ENCODE measurements at regions of chr1 and their contacts with region 1.

Region 1: DNA sequence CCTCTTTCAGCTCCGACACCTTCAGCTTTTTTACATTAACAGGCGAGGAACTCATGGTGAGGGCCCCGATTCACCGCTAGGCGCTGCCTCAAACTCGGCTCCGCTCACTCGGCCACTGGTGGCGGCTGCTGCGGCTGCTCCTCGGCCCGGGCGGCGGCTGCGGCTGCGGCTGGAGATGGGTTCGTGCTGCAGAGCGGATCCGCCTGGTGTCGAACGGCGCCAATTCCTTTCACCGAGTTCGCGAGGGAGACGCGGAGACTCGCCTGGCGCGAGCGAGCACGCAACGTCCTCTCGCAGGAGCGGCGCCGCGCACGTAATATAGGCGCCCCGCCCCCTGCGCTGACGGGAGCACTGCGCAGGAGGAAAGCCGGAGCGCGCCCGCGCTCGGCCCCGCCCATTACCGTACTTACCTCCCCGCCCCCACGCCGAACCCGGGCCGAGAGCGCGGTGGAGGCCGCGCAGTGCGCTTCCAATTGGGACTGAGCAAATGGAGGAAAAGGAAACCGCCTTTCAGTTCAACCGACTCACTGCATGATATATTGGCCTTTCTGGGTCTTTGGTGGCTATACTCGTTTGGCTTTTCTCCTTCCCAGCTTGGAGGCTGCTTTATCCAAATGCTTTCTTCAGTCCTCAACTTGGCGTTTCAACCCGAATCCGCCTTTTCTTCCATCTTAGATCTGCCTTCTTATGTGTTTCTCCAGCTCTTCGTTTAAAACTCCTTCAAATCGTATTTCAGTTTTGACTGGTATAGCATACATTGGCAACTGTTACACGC is at the start of gene HNRNPU:
- DNase-seq: peak; percentile 91 to 96
- H3K4me3 ChIP-seq: peak within 1 kb of the TSS; percentile 90 to 100 (median 98)
- H3K27ac ChIP-seq: peak within 1 kb of the TSS; percentile 93
- H3K4me1 ChIP-seq: peaks cover 0 to 3% (median 3%) of the 10 kb centered on the region in 4 experiments; a peak in 4 of 7 replicates
- H3K27me3 ChIP-seq: no peaks in the 10 kb centered on the region
- CTCF ChIP-seq: peak in 1 of 3 experiments; percentile 8; a peak in 1 of 4 replicates
- EP300 ChIP-seq: peak in 1 of 2 experiments; percentile 4; a peak in 1 of 3 replicates
- POLR2A ChIP-seq: peak; percentile 83 to 86
- RAD21 ChIP-seq: 0 out of 4 replicates have a peak, but pooled peaks of 1 of the 2 experiments have one; percentile 4
- total RNA-seq, gene HNRNPU: 606 and 614 TPM in 2 replicates

Region 2: GRCh38 chr1:244615301-244615700 is 249.1 kb before region 1 on chr1:
- CTCF ChIA-PET with region 1: no interaction called
- POLR2A ChIA-PET with region 1: no interaction called
- DNase-seq: no peak
- H3K4me3 ChIP-seq: no peak overlapping the region
- H3K27ac ChIP-seq: no peak overlapping the region
- H3K4me1 ChIP-seq: peaks cover 0 to 6% (median 1%) of the 10 kb centered on the region in 4 experiments; a peak in 1 of 7 replicates
- H3K27me3 ChIP-seq: no peaks in the 10 kb centered on the region
- CTCF ChIP-seq: no peak
- EP300 ChIP-seq: no peak
- POLR2A ChIP-seq: no peak
- RAD21 ChIP-seq: no peak

Region 3: GRCh38 chr1:244815600-244816099 is 48.8 kb before region 1 on chr1:
- CTCF ChIA-PET with region 1: interaction called, 3 read pairs
- POLR2A ChIA-PET with region 1: interaction called, 14 read pairs
- DNase-seq: peak in 1 of 2 experiments; percentile 64
- H3K4me3 ChIP-seq: peak overlapping the region; percentile 16 to 59 (median 40)
- H3K27ac ChIP-seq: peak overlapping the region; percentile 69
- H3K4me1 ChIP-seq: peaks cover 1 to 11% (median 7%) of the 10 kb centered on the region in 4 experiments
- H3K27me3 ChIP-seq: no peaks in the 10 kb centered on the region
- CTCF ChIP-seq: no peak
- EP300 ChIP-seq: peak in 1 of 2 experiments; percentile 32; a peak in 1 of 3 replicates
- POLR2A ChIP-seq: peak; percentile 50 to 55
- RAD21 ChIP-seq: no peak

Region 4: GRCh38 chr1:244874974-244875579 is 10.6 kb after region 1 on chr1:
- CTCF ChIA-PET with region 1: interaction called, 5 read pairs
- POLR2A ChIA-PET with region 1: interaction called, 102 read pairs
- DNase-seq: peak in 1 of 2 experiments; percentile 69
- H3K4me3 ChIP-seq: 0 out of 8 replicates have a peak overlapping the region, but pooled peaks of 1 of the 4 experiments have one; percentile 2
- H3K27ac ChIP-seq: no peak overlapping the region
- H3K4me1 ChIP-seq: peaks cover 0 to 6% (median 3%) of the 10 kb centered on the region in 4 experiments; a peak in 3 of 7 replicates
- H3K27me3 ChIP-seq: no peaks in the 10 kb centered on the region
- CTCF ChIP-seq: no peak
- EP300 ChIP-seq: no peak
- POLR2A ChIP-seq: no peak
- RAD21 ChIP-seq: no peak

Region 5: GRCh38 chr1:244970661-244971551 is 106.5 kb after region 1 on chr1:
- CTCF ChIA-PET with region 1: interaction called, 4 read pairs
- POLR2A ChIA-PET with region 1: interaction called, 139 read pairs
- DNase-seq: peak; percentile 84 to 96
- H3K4me3 ChIP-seq: peak overlapping the region; percentile 65 to 88 (median 76)
- H3K27ac ChIP-seq: peak overlapping the region; percentile 99
- H3K4me1 ChIP-seq: peaks cover 3 to 9% (median 7%) of the 10 kb centered on the region in 4 experiments; a peak in 6 of 7 replicates
- H3K27me3 ChIP-seq: no peaks in the 10 kb centered on the region
- CTCF ChIP-seq: peak; percentile 24 to 43 (median 24); a peak in 3 of 4 replicates
- EP300 ChIP-seq: peak in 1 of 2 experiments; percentile 40; a peak in 2 of 3 replicates
- POLR2A ChIP-seq: peak; percentile 90 to 93
- RAD21 ChIP-seq: peak in 1 of 2 experiments; percentile 17; a peak in 2 of 4 replicates